ENCODE measurements at regions of chr19 and their contacts with region 1.

Region 1: GRCh38 chr19:11293433-11294389 is 2.2 kb upstream of the TSPAN16 start:
- DNase-seq: peak; percentile 95 to 97
- ATAC-seq: peak; percentile 95 to 98 (median 98)
- H3K4me3 ChIP-seq: peak overlapping the region in 7 of 10 donors; percentile 9 to 40 (median 26)
- H3K27ac ChIP-seq: peak overlapping the region in 8 of 10 donors; percentile 29 to 70 (median 62)
- H3K4me1 ChIP-seq: peaks cover 0 to 38% (median 10%) of the 10 kb centered on the region in 9 donors
- H3K27me3 ChIP-seq: no peaks in the 10 kb centered on the region
- CTCF ChIP-seq: peak; percentile 94 to 100 (median 98)

Region 2: DNA sequence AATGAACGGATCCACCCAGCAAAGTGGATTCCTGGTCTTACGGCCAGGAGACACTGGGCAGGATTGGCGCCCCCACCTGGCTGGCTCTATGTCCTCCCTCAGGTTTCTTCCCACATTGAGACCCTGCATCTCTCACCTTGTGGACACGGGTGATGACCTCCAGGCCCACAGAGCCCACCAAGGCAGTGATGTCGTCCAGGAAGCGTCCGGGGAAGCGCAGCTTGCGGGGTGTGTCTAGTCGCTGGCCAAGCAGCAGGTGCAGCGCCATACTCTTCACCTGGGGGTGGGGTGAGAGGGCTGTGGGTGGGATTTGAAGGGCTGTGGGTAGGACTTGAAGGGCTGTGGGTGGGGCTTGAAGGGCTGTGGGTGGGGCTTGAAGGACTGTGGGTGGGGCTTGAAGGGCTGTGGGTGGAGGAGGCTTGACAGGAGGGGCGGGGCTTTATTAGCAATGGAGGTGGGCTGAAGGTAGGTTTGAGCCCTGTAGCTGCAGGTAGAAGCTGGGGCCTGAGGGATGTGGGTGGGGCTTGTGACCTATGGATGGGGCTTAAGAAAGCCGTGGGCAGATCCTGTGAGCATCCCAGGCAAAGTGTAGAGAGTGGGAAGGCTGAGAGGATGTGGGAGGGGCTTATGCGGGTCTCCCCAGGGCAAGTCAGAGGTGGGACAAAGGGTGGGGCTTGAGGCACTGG is 66.4 kb before region 1 on chr19:
- intact Hi-C with region 1: no loop called
- DNase-seq: no peak
- ATAC-seq: peak in 3 of 8 donors; percentile 22 to 31 (median 23)
- H3K4me3 ChIP-seq: no peak overlapping the region
- H3K27ac ChIP-seq: no peak overlapping the region
- H3K4me1 ChIP-seq: no peaks in the 10 kb centered on the region
- H3K27me3 ChIP-seq: no peaks in the 10 kb centered on the region
- CTCF ChIP-seq: peak in 1 of 9 donors; percentile 7

Region 3: DNA sequence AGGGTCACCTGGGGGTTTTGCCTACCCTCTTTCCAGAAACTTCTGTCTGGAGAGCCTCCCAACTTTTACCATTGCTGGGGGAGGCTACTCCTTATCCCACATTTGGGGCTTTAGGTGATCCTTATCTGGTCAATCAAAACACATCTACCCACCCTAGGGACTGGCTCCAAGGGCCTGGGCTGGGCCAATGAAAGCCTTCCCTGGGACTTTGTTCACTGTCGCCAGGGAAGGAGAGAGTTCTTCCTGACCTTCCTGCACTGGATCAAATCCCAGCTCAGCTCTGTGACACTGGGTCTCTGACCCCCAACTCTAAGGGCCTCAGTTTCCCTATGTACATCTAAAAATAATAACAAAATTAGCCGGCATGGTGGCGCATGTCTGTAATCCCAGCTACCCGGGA is 42.5 kb before region 1 on chr19:
- intact Hi-C with region 1: no loop called
- DNase-seq: no peak
- ATAC-seq: no peak
- H3K4me3 ChIP-seq: no peak overlapping the region
- H3K27ac ChIP-seq: peak overlapping the region in 7 of 10 donors; percentile 77 to 95 (median 89)
- H3K4me1 ChIP-seq: peaks cover 37 to 83% (median 63%) of the 10 kb centered on the region in 9 donors
- H3K27me3 ChIP-seq: no peaks in the 10 kb centered on the region
- CTCF ChIP-seq: no peak

Region 4: GRCh38 chr19:11339254-11340098 is 45.8 kb after region 1 on chr19 and contains the start of gene RAB3D:
- intact Hi-C with region 1: loop called in 3 of 10 experiments (anchors 5 to 10 kb)
- DNase-seq: peak; percentile 95 to 96
- ATAC-seq: peak; percentile 93 to 99 (median 97)
- H3K4me3 ChIP-seq: peak within 1 kb of the TSS; percentile 58 to 84 (median 81)
- H3K27ac ChIP-seq: peak within 1 kb of the TSS; percentile 23 to 91 (median 82)
- H3K4me1 ChIP-seq: peaks cover 3 to 45% (median 19%) of the 10 kb centered on the region in 9 donors
- H3K27me3 ChIP-seq: no peaks in the 10 kb centered on the region
- CTCF ChIP-seq: no peak
- total RNA-seq, gene RAB3D: 4.5 to 11.6 (median 6.3) TPM

Region 5: DNA sequence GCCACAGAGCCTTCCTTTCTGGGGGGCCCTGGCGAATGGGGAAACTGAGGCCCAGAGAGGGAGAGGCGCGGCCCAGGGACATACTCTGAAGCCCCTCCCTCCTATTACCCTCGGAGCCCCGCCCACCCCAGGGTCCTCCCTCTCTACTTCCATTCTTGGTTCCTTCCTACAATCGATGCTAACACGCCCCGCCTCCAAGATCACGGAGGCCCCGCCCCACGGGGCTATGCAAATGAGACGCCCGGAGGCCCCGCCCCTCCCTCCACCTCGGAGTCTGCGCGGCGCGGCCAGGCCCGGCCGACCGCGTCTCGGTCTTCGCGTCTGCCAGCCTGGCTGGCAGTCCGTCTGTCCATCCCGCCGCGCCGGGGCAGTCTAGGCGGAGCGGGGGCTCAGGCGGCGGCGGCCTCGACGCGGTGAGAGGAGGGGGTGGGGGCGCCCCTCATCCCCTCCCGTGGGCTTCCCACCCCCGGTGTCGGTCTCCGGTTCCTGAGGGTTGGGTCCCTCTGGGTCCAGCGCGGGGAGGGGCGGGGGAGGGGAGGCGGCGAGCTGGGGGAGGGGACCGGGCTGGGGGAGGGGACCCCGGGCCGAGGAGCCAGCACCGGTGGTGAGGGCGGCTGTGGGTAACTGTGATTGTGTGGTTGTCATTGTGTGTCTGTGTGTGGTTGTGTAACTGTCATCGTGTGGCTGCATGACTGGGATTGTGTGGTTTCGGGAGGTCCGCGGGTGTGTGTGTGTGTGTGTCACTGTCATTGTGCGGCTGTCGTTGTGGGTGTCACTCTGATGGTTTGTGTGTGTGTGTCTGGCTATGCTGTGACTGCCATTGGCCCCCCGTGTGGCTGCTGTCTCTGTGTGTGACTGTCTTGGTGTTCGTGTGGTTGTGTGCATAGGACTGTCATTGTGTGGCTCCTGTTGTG is 61.7 kb after region 1 on chr19 and contains the start of gene PLPPR2:
- intact Hi-C with region 1: loop called in 1 of 10 experiments (anchors 10 kb)
- DNase-seq: peak; percentile 93 to 95
- ATAC-seq: peak; percentile 92 to 97 (median 94)
- H3K4me3 ChIP-seq: peak within 1 kb of the TSS; percentile 51 to 71 (median 64)
- H3K27ac ChIP-seq: peak within 1 kb of the TSS in 9 of 10 donors; percentile 30 to 86 (median 63)
- H3K4me1 ChIP-seq: peaks cover 0 to 16% (median 6%) of the 10 kb centered on the region in 9 donors
- H3K27me3 ChIP-seq: no peaks in the 10 kb centered on the region
- CTCF ChIP-seq: no peak
- total RNA-seq, gene PLPPR2: 4.1 to 19.8 (median 10.3) TPM

Region 6: DNA sequence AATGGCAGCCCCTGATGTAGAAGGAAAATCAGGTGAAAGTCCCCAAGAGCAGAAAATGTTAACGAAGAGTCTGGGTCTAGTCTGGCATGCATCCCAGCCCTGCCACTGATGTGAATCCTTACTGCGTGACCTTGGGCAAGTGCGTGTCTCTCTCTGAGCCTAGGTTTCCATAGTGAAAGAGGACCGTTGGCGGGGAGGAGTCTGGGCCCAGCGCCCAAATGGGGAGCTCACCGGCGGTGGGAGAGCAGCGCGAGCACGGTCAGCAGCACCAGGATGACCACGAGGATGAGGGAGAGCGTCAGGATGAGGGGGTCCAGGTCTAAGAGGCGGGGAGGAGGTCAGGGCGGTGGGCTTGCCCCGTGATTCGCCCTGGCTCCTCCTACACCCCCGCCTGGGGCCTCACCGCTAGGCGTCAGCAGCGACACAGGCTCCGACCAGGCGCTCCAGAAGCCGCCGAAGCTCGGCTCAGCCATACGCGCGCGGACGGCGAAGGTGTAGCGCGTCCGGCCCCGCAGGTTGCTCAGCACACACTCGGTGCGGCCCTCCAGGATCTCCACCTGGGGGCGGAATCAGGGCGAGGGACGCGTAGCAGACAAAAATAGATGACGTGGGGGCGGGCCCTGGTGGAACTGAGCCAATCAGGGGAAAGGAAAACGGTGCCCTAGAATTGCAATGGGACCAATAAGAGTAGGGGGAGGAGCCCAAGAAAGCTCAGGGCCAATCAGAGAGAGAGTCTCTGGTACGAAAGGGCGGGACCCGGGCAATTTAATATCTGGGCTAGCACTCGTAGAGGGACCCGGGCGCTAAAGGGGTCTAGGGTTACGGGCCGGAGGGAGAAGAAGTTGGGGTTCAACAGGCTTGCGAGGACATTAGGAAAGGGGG is 87.2 kb after region 1 on chr19:
- intact Hi-C with region 1: loop called in 2 of 10 experiments (anchors 10 kb)
- DNase-seq: peak; percentile 93 to 97
- ATAC-seq: peak; percentile 88 to 94 (median 92)
- H3K4me3 ChIP-seq: peak overlapping the region; percentile 36 to 87 (median 65)
- H3K27ac ChIP-seq: peak overlapping the region; percentile 47 to 87 (median 80)
- H3K4me1 ChIP-seq: peaks cover 20 to 71% (median 52%) of the 10 kb centered on the region in 9 donors
- H3K27me3 ChIP-seq: peaks cover 0 to 24% (median 9%) of the 10 kb centered on the region in 7 donors
- CTCF ChIP-seq: peak; percentile 60 to 89 (median 77)

Region 7: GRCh38 chr19:11435058-11435832 is 141.5 kb after region 1 on chr19 and contains the starts of genes ODAD3 and PRKCSH:
- intact Hi-C with region 1: loop called in 5 of 10 experiments (anchors 5 to 10 kb)
- DNase-seq: peak; percentile 98 to 99
- ATAC-seq: peak; percentile 98 to 99 (median 98)
- H3K4me3 ChIP-seq: peak within 1 kb of the TSS; percentile 50 to 87 (median 78)
- H3K27ac ChIP-seq: peak within 1 kb of the TSS; percentile 53 to 86 (median 80)
- H3K4me1 ChIP-seq: peaks cover 8 to 23% (median 20%) of the 10 kb centered on the region in 9 donors
- H3K27me3 ChIP-seq: no peaks in the 10 kb centered on the region
- CTCF ChIP-seq: peak; percentile 60 to 95 (median 89)
- total RNA-seq, gene ODAD3: 0.17 to 0.64 (median 0.34) TPM in 9 of 10 donors, not detected in the other
- total RNA-seq, gene PRKCSH: 106 to 177 (median 123) TPM

Region 8: GRCh38 chr19:11482384-11483050 is 188.8 kb after region 1 on chr19:
- intact Hi-C with region 1: loop called in 6 of 10 experiments (anchors 5 to 10 kb)
- DNase-seq: peak; percentile 72 to 87
- ATAC-seq: peak; percentile 87 to 95 (median 91)
- H3K4me3 ChIP-seq: peak overlapping the region; percentile 6 to 50 (median 40)
- H3K27ac ChIP-seq: peak overlapping the region in 1 of 10 donors; percentile 14
- H3K4me1 ChIP-seq: peaks cover 10 to 46% (median 35%) of the 10 kb centered on the region in 9 donors
- H3K27me3 ChIP-seq: peaks cover 5 to 63% (median 52%) of the 10 kb centered on the region in 7 donors
- CTCF ChIP-seq: peak; percentile 81 to 97 (median 93)